ENCODE measurements at regions of chr4 and their contacts with region 1.

Region 1: GRCh38 chr4:74793757-74794340 is 474 bp downstream of the BTC start:
- DNase-seq: peak; percentile 40 to 61
- H3K4me3 ChIP-seq: peak overlapping the region; percentile 52 to 78 (median 70)
- H3K27ac ChIP-seq: peak overlapping the region; percentile 90 to 91
- H3K4me1 ChIP-seq: no peaks in the 10 kb centered on the region
- H3K27me3 ChIP-seq: peaks cover 0 to 4% of the 10 kb centered on the region in 2 donors
- CTCF ChIP-seq: no peak
- POLR2A ChIP-seq: no peak

Region 2: DNA sequence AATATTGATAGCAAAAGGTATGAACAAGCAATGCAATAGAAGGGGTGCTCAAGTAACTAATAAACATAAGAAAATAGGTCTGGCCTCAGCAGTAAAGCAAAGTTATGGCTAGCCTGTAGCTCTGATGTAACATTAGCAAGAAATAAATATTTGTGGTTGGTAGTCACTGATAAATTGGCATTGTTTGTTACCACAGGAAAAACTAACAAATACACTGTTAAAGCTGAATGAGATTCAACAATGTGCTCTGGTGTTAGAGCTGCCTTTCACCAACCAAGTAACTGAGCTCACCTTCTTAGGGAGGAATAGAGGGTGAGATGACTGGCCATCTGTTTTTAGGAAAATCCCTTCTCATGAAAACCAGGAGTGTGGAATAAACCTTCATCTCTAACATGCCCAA is 277.5 kb before region 1 on chr4:
- intact Hi-C with region 1: no loop called
- DNase-seq: no peak
- H3K4me3 ChIP-seq: no peak overlapping the region
- H3K27ac ChIP-seq: no peak overlapping the region
- H3K4me1 ChIP-seq: no peaks in the 10 kb centered on the region
- H3K27me3 ChIP-seq: no peaks in the 10 kb centered on the region
- CTCF ChIP-seq: no peak
- POLR2A ChIP-seq: no peak

Region 3: DNA sequence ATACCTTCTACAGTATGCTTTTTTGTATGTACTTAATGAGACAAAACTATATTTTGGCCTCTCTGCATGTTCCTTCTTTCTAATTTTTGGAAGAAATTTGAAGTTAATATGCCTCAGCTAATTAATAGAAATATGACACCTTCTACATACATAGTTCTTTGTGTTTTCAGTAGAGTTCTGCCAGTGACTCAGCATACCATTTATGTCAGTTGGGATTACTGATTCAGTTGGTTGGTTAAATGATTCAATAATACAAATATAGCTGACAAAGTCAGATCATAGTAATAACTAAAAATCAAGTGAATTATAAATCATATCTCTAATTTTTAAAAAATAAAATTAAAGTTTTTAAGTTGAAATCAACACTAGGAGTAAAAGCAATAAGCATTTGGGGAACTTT is 16.3 kb before region 1 on chr4:
- intact Hi-C with region 1: loop called (anchors 1 kb)
- DNase-seq: no peak
- H3K4me3 ChIP-seq: no peak overlapping the region
- H3K27ac ChIP-seq: no peak overlapping the region
- H3K4me1 ChIP-seq: no peaks in the 10 kb centered on the region
- H3K27me3 ChIP-seq: no peaks in the 10 kb centered on the region
- CTCF ChIP-seq: no peak
- POLR2A ChIP-seq: no peak

Measured in breast epithelium (tissue), 4 donors.